CD4-positive, alpha-beta T cell (primary cell): ENCODE measurements at regions of chr2 and their contacts with region 1.

Region 1: GRCh38 chr2:218659258-218659987 is at the starts of genes BCS1L and ZNF142:
- DNase-seq: peak; percentile 82 to 95 (median 92)
- ATAC-seq: peak; percentile 98
- H3K4me3 ChIP-seq: peak within 1 kb of the TSS; percentile 79
- H3K4me3 Mint-ChIP-seq: peak within 1 kb of the TSS; percentile 95
- H3K27ac ChIP-seq: peak within 1 kb of the TSS; percentile 53 to 83
- H3K27ac Mint-ChIP-seq: peak within 1 kb of the TSS; percentile 89
- H3K4me1 ChIP-seq: peaks cover 19% of the 10 kb centered on the region
- H3K4me1 Mint-ChIP-seq: peaks cover 35% of the 10 kb centered on the region
- H3K27me3 ChIP-seq: no peaks in the 10 kb centered on the region
- H3K27me3 Mint-ChIP-seq: no peaks in the 10 kb centered on the region
- CTCF ChIP-seq: no peak
- total RNA-seq, gene BCS1L: 11.4 to 12.7 TPM
- total RNA-seq, gene ZNF142: 40.3 to 44.2 TPM

Region 2: GRCh38 chr2:217177720-217178119 is 1481.7 kb before region 1 on chr2:
- CTCF ChIA-PET with region 1: no interaction called
- POLR2A ChIA-PET with region 1: no interaction called
- intact Hi-C with region 1: no loop called
- DNase-seq: no peak
- ATAC-seq: no peak
- H3K4me3 ChIP-seq: no peak overlapping the region
- H3K4me3 Mint-ChIP-seq: no peak overlapping the region
- H3K27ac ChIP-seq: no peak overlapping the region
- H3K27ac Mint-ChIP-seq: no peak overlapping the region
- H3K4me1 ChIP-seq: no peaks in the 10 kb centered on the region
- H3K4me1 Mint-ChIP-seq: no peaks in the 10 kb centered on the region
- H3K27me3 ChIP-seq: no peaks in the 10 kb centered on the region
- H3K27me3 Mint-ChIP-seq: peaks cover 5% of the 10 kb centered on the region
- CTCF ChIP-seq: no peak

Region 3: DNA sequence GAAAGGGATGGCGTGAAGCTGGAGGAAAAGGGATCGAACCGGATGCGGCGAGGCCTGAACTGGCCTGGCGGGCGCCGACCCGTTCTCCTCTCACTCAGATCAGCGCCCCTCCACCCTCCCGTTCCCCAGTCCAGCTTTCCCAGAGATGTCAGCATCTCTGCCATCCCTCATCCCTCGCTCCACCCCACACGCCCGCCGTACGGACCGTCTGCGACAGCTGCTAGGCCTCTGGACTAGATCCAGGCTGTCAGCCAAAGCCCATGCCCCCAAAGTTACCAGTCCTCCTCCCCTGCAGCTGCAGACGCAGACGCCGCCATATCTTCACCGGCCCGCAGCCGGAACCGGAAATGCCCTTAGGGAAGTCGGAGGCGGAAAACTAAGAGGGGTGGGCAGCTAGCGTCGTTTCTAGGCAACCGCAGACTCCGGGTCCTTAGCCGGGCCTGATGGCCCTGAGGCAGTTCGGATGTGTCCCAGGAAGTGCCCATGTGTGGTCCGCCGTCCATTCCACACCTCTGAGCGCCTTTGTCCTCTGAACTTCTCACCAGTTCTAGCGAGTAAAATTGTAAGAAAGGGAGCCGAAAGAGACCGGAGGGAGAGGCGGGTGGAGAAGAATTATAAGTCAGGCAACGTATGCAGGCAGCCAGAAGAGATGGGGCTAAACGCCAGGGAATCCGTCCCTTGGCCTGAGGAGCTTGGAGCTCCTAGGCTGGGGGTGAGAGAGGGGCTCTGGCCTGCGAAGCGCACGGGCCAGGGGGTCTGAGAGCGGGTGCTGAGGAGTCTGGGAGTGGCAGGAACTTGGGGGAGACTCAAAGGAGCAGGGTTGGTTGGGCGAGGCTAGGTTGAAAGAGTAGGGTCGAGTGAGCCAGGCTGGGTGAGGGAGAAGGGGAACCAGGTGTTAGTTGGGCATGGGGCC is 12.5 kb after region 1 on chr2 and contains the starts of genes RNF25 and STK36:
- CTCF ChIA-PET with region 1: interaction called, 12 read pairs
- POLR2A ChIA-PET with region 1: interaction called, 84 read pairs
- intact Hi-C with region 1: loop called (anchors 1 kb)
- DNase-seq: peak; percentile 69 to 92 (median 77)
- ATAC-seq: peak; percentile 93
- H3K4me3 ChIP-seq: peak within 1 kb of the TSS; percentile 81
- H3K4me3 Mint-ChIP-seq: peak within 1 kb of the TSS; percentile 98
- H3K27ac ChIP-seq: peak within 1 kb of the TSS; percentile 54 to 81
- H3K27ac Mint-ChIP-seq: peak within 1 kb of the TSS; percentile 96
- H3K4me1 ChIP-seq: peaks cover 17% of the 10 kb centered on the region
- H3K4me1 Mint-ChIP-seq: peaks cover 25% of the 10 kb centered on the region
- H3K27me3 ChIP-seq: no peaks in the 10 kb centered on the region
- H3K27me3 Mint-ChIP-seq: no peaks in the 10 kb centered on the region
- CTCF ChIP-seq: no peak
- total RNA-seq, gene RNF25: 18.0 to 18.6 TPM
- total RNA-seq, gene STK36: 9.8 to 12.7 TPM

Region 4: DNA sequence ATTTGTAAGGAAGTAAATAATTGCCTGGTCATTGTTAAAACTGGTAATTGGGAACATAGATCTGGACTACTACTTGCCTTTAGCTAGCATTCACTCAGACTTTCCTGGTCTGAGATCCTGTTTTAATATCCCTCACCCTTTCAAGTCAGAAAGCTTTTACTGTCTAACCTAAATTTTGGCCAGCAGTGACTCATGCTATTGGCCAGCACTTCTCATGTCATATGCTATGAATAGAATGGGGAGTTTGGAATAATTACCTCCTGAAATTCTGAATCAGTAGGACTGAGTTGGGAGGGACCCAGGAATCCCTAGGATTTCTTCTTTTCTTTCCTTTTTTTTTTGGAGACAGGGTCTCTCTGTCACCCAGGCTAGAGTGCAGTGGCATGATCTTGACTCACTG is 31.8 kb after region 1 on chr2:
- CTCF ChIA-PET with region 1: interaction called, 7 read pairs
- POLR2A ChIA-PET with region 1: interaction called, 13 read pairs
- intact Hi-C with region 1: no loop called
- DNase-seq: no peak
- ATAC-seq: no peak
- H3K4me3 ChIP-seq: no peak overlapping the region
- H3K4me3 Mint-ChIP-seq: no peak overlapping the region
- H3K27ac ChIP-seq: no peak overlapping the region
- H3K27ac Mint-ChIP-seq: no peak overlapping the region
- H3K4me1 ChIP-seq: no peaks in the 10 kb centered on the region
- H3K4me1 Mint-ChIP-seq: peaks cover 5% of the 10 kb centered on the region
- H3K27me3 ChIP-seq: no peaks in the 10 kb centered on the region
- H3K27me3 Mint-ChIP-seq: no peaks in the 10 kb centered on the region
- CTCF ChIP-seq: no peak

Region 5: GRCh38 chr2:218710687-218711549 is 51.5 kb after region 1 on chr2 and contains the start of gene TTLL4:
- CTCF ChIA-PET with region 1: interaction called, 23 read pairs
- POLR2A ChIA-PET with region 1: interaction called, 15 read pairs
- intact Hi-C with region 1: loop called (anchors 2 kb)
- DNase-seq: peak; percentile 97 to 99 (median 99)
- ATAC-seq: peak; percentile 98
- H3K4me3 ChIP-seq: peak within 1 kb of the TSS; percentile 96
- H3K4me3 Mint-ChIP-seq: peak within 1 kb of the TSS; percentile 99
- H3K27ac ChIP-seq: peak within 1 kb of the TSS; percentile 66 to 87
- H3K27ac Mint-ChIP-seq: peak within 1 kb of the TSS; percentile 91
- H3K4me1 ChIP-seq: peaks cover 22% of the 10 kb centered on the region
- H3K4me1 Mint-ChIP-seq: peaks cover 26% of the 10 kb centered on the region
- H3K27me3 ChIP-seq: peaks cover 0 to 6% of the 10 kb centered on the region in 2 experiments
- H3K27me3 Mint-ChIP-seq: peaks cover 10% of the 10 kb centered on the region
- CTCF ChIP-seq: peak; percentile 87
- total RNA-seq, gene TTLL4: 7.3 to 10.8 TPM

Region 6: DNA sequence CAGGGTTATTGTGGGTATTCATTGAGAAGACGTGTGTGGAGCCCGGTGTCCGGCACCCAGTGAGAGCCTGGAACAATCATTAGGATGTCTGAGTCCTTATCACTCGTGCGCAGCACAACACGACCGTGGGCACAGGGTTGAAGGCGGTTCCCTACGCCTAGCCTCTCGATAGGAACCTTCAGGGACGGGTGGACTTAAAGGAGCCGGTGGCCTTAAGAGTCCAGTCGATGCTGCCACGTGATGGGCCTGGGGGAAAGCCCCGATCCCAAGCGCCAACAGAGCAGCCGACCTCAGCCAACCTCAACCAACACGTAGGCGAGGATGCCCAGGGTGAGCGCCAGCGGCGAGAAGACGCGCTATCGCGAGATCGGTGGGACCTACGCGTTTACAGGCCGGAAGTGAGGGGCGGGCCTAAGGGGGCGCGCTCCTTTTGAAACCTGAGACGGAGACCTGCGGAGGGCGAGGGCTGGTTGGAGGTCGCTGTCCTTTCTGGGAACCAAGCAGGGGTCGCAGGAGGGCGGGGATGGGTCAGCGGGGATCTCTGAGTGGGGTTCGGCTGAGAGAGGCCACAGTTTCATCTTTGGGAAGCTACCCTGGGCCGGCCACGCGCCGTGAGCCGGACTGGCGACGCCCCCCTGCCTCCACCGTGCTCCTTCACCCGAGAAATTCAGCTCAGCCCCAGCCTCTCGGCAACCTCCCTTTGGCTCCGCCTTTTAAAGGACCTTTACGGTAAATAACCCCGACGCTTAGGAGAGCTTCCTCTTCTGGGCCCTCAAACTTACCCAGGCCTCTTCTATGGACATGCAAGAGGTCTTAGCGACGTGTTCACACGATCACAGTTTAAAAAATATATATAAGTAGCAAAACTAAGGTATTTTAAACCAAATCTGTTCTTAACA is 249.5 kb after region 1 on chr2:
- CTCF ChIA-PET with region 1: no interaction called
- POLR2A ChIA-PET with region 1: no interaction called
- intact Hi-C with region 1: loop called in 1 of 2 experiments (anchors 5 kb)
- DNase-seq: peak; percentile 78 to 95 (median 84)
- ATAC-seq: peak; percentile 100
- H3K4me3 ChIP-seq: peak overlapping the region; percentile 68
- H3K4me3 Mint-ChIP-seq: peak overlapping the region; percentile 85
- H3K27ac ChIP-seq: no peak overlapping the region
- H3K27ac Mint-ChIP-seq: peak overlapping the region; percentile 78
- H3K4me1 ChIP-seq: peaks cover 15% of the 10 kb centered on the region
- H3K4me1 Mint-ChIP-seq: peaks cover 13% of the 10 kb centered on the region
- H3K27me3 ChIP-seq: peaks cover 4 to 8% of the 10 kb centered on the region in 2 experiments
- H3K27me3 Mint-ChIP-seq: peaks cover 41% of the 10 kb centered on the region
- CTCF ChIP-seq: no peak

Region 7: DNA sequence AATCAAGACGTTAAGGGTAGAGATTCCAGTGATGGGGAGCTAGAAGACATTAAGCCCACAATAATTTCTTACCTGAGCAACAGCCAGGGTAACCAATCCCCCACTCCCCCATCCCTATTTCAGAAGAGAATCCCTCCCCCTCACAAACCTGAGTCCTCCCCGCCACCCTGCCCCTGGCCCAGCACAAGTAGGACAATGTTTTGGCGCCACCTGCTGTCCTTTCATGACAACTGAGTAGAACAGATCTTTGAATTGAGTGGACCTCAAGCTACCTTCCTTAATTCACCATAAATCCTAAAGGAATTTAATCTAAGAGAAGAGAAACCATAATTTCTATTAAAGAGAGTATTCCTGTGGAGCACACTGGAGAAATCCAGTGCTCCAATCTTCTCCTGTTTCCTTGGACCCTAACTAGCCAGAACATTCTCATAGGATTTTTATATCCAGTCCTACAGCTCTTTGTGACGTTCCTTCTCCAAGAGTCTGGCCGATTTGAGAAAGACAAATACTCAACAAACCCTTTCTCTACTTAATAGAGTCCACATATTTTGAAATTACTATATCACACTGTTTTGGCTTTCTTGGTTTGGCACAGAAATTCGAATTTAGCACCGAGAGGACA is 460.1 kb after region 1 on chr2:
- CTCF ChIA-PET with region 1: no interaction called
- POLR2A ChIA-PET with region 1: no interaction called
- intact Hi-C with region 1: no loop called
- DNase-seq: peak; percentile 29 to 76 (median 46)
- ATAC-seq: no peak
- H3K4me3 ChIP-seq: no peak overlapping the region
- H3K4me3 Mint-ChIP-seq: no peak overlapping the region
- H3K27ac ChIP-seq: no peak overlapping the region
- H3K27ac Mint-ChIP-seq: no peak overlapping the region
- H3K4me1 ChIP-seq: peaks cover under 1% of the 10 kb centered on the region
- H3K4me1 Mint-ChIP-seq: peaks cover 14% of the 10 kb centered on the region
- H3K27me3 ChIP-seq: no peaks in the 10 kb centered on the region
- H3K27me3 Mint-ChIP-seq: no peaks in the 10 kb centered on the region
- CTCF ChIP-seq: peak; percentile 62

Region 8: DNA sequence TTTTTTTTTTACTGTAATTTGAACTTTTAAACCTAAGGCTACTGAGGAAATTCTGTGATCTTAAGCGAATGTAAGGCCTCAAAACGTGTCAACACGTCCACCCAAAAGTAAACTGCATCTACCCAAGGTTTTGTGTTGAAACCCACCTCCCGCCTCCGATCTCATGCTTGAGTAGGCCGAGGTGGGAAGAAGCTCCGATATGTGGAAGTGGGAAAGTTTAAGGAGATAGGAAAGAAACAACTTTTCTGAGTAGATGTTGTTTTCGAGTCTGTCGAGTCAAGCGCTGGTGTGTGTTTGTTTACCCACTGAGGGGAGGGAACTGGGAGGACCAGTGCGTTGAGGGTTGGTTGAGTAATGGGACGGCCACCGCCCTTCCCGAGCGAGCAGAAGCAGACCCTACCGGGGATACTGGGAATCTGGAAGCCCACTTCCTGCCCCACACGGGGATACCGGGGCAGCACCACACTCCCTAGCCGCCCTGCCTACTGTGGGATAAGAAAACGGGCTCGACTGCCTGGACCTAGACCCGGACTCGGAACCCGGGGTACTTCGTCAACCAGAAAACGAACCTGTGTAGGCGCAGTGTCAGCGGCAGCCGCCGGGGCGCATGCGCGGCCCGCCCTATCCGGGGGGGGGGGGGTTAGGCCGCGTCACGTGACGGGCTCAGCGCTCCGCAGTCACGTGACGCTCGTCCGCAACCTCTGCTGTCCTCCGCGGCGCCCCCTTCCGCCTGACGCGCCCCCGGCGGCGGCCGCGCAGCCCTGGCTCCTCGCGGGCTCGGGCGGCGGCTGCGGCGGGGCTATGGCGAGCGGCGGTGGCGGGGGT is 518.3 kb after region 1 on chr2 and contains the start of gene RETREG2:
- CTCF ChIA-PET with region 1: no interaction called
- POLR2A ChIA-PET with region 1: no interaction called
- intact Hi-C with region 1: no loop called
- DNase-seq: peak; percentile 67 to 96 (median 78)
- ATAC-seq: peak; percentile 66
- H3K4me3 ChIP-seq: peak within 1 kb of the TSS; percentile 90
- H3K4me3 Mint-ChIP-seq: peak within 1 kb of the TSS; percentile 94
- H3K27ac ChIP-seq: peak within 1 kb of the TSS; percentile 97 to 99
- H3K27ac Mint-ChIP-seq: peak within 1 kb of the TSS; percentile 99
- H3K4me1 ChIP-seq: peaks cover 89% of the 10 kb centered on the region
- H3K4me1 Mint-ChIP-seq: peaks cover 72% of the 10 kb centered on the region
- H3K27me3 ChIP-seq: no peaks in the 10 kb centered on the region
- H3K27me3 Mint-ChIP-seq: no peaks in the 10 kb centered on the region
- CTCF ChIP-seq: no peak
- total RNA-seq, gene RETREG2: 82.3 to 83.2 TPM